ENCODE measurements at regions of chr20 and their contacts with region 1.

Region 1: DNA sequence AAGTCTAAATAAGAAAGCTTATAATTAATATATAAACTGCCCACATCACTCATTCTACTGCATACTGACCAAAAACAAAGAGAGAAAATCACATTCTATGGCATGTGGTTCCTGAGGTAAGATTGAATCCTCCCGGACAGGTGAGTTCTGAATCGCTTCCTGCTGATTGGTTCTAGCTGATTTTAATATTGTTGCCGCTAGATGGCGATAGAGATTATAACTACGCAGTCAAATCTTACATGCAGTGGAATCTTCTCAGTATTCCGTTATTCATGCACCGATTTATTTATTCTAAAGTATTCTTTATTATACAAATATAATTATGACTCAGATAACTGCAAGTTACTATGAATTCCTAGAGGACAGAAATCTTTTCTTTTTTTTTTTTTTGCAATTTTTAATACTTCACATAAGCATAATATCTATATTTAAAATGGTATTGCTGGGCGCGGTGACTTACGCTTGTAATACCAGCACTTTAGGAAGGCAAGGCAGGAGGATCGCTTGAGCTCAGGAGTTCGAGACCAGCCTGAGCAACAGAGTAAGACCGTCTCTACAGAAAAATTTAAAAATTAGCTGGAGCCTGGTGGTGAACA is 24.2 kb upstream of the TMX4 start:
- H3K4me3 ChIP-seq: no peak overlapping the region
- H3K27ac ChIP-seq: no peak overlapping the region
- H3K4me1 ChIP-seq: no peaks in the 10 kb centered on the region
- CTCF ChIP-seq: peak; percentile 18; the same call in 1 of the 2 replicates

Region 2: DNA sequence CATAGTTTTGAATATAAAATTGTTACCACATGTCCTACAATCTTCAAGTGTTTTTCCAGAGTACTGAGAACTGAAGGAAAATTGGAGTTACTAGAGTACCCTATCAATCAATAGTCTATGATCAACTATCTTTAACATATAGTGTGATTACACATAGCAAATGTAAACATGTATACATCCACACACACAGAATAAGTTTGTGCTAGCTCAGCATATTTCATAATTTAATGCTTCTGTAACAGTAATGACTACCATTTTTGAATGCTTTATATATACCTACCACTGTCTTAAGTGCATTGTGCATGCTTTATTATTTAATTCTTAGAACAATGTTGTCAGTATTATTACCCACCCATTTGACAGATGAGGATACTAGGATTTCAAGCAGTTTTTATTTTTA is 627.4 kb before region 1 on chr20:
- CTCF ChIA-PET with region 1: no interaction called
- POLR2A ChIA-PET with region 1: no interaction called
- H3K4me3 ChIP-seq: no peak overlapping the region
- H3K27ac ChIP-seq: no peak overlapping the region
- H3K4me1 ChIP-seq: no peaks in the 10 kb centered on the region
- CTCF ChIP-seq: no peak

Region 3: GRCh38 chr20:7935027-7935551 is 108.7 kb before region 1 on chr20:
- CTCF ChIA-PET with region 1: interaction called, 17 read pairs
- POLR2A ChIA-PET with region 1: no interaction called
- H3K4me3 ChIP-seq: no peak overlapping the region
- H3K27ac ChIP-seq: no peak overlapping the region
- H3K4me1 ChIP-seq: no peaks in the 10 kb centered on the region
- CTCF ChIP-seq: no peak

Region 4: DNA sequence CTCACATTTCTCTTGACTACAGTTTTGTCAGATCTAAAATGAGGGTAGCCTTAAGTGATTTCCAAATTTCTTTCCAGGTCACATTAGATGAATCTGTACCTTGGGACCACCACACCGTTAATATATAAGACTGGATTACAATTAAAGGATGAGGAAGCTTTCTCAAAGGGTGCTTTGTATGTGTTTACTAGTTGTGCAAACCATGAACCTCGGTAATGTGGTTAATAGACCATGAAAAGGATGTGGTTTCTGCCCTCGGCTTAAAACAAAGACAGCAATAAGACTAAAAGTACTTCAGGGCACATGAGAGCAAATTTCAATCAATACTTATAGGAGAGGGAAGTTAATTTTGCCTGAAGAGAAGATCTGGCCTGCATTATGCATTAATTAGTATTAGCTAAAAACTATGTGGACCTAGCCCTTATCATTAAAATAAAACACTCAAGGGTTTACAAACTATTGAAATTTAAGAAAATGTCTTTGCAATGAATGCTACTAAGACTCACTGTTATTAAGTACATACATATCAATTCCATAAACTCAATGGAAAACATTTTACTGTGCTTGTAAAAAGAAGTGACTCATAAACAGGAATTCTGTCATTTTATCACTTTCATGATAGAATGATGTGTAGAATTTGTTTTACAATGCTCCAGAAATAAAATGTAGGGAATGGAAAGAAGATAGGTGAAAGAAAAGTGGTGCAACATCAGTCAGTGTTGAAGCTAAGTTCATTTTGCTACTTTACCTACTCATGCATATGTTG is 23.3 kb before region 1 on chr20:
- CTCF ChIA-PET with region 1: interaction called, 11 read pairs
- POLR2A ChIA-PET with region 1: no interaction called
- H3K4me3 ChIP-seq: no peak overlapping the region
- H3K27ac ChIP-seq: no peak overlapping the region
- H3K4me1 ChIP-seq: peaks cover 11% of the 10 kb centered on the region; the same call in 1 of the 2 replicates
- CTCF ChIP-seq: no peak

Region 5: DNA sequence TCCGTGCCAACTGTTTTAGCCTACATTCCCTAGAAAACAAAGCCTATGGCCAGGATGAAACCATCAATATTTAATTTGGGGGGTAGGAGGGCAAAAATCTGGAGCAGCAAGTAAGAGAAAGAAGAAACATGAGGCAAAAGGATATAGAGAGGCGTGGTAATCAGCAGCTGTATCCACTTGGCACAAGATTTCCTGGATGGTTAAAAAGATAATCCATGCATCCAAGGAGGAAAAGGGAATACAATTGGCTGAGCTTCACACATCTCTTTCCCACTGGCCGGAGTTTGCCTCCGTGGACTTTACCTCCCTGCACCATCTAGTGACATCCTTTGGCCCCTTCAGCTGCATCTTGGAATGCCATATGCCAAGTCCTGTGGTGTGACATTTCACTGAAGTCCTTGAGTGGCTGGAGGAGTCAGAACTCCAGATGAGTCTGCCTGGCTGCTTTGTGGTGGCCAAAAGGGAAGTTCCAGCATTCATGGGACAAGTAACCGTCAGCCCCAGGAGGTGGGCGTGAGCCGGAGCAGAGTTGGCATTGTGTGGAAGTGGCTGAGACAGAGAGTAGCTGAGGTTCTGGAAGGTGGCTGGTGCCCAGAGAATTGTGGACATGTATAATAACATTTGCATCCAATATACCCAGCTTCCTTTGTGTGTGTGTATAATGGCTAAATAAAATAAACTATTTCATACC is 10.5 kb before region 1 on chr20:
- CTCF ChIA-PET with region 1: interaction called, 18 read pairs
- POLR2A ChIA-PET with region 1: no interaction called
- H3K4me3 ChIP-seq: no peak overlapping the region
- H3K27ac ChIP-seq: no peak overlapping the region
- H3K4me1 ChIP-seq: no peaks in the 10 kb centered on the region
- CTCF ChIP-seq: no peak

Region 6: GRCh38 chr20:8389381-8390036 is 345.7 kb after region 1 on chr20:
- CTCF ChIA-PET with region 1: interaction called, 16 read pairs
- POLR2A ChIA-PET with region 1: no interaction called
- H3K4me3 ChIP-seq: no peak overlapping the region
- H3K27ac ChIP-seq: no peak overlapping the region
- H3K4me1 ChIP-seq: peaks cover 7% of the 10 kb centered on the region; the same call in 1 of the 2 replicates
- CTCF ChIP-seq: no peak

Measured in HEK293 (cell line).